B cell (primary cell): ENCODE measurements at regions of chr5 and their contacts with region 1.

Region 1: GRCh38 chr5:150801117-150801927 is 22.8 kb downstream of the SMIM3 start:
- DNase-seq: peak; percentile 69
- ATAC-seq: no peak
- H3K4me3 ChIP-seq: no peak overlapping the region
- H3K4me3 Mint-ChIP-seq: no peak overlapping the region
- H3K27ac ChIP-seq: no peak overlapping the region
- H3K27ac Mint-ChIP-seq: no peak overlapping the region
- H3K4me1 ChIP-seq: peaks cover 3 to 4% of the 10 kb centered on the region in 2 donors
- H3K4me1 Mint-ChIP-seq: no peaks in the 10 kb centered on the region
- H3K27me3 ChIP-seq: peaks cover 0 to 7% (median 5%) of the 10 kb centered on the region in 4 experiments
- H3K27me3 Mint-ChIP-seq: peaks cover 30% of the 10 kb centered on the region
- CTCF ChIP-seq: peak; percentile 83

Region 2: DNA sequence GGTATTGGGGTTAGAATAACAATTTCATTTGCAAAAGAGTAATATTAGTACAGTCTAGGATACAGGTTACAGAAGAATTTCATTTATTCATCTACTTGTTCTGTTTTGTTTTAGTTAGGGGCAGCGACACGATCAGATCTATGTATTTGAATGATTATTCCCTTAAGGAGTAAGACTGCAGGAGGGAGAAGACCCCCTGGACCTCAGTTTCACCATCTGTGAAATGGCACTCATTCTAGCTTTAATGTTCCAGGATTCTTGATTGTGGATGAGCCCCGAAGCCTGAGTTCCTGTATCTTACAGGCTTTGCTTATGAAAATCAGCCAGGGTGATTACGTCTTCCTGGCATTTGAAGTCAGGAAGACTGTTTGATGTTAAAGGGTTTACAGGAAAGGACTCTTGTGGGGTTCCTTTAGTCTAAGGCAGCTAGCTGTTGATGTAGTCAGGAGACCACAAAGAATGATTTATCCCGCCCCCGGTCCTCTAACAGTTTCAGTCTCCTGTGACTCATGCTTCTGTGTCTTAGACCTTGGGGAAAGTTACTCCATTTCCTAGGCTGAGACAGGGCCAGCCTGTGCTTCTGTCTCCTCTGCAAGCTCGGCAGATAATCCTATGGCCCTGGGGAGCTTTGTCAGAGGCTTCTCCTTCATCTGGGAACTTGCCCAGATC is 11.2 kb before region 1 on chr5:
- CTCF ChIA-PET with region 1: interaction called, 15 read pairs
- POLR2A ChIA-PET with region 1: no interaction called
- intact Hi-C with region 1: no loop called
- DNase-seq: no peak
- ATAC-seq: no peak
- H3K4me3 ChIP-seq: no peak overlapping the region
- H3K4me3 Mint-ChIP-seq: no peak overlapping the region
- H3K27ac ChIP-seq: no peak overlapping the region
- H3K27ac Mint-ChIP-seq: no peak overlapping the region
- H3K4me1 ChIP-seq: no peaks in the 10 kb centered on the region
- H3K4me1 Mint-ChIP-seq: no peaks in the 10 kb centered on the region
- H3K27me3 ChIP-seq: peaks cover 0 to 22% (median 13%) of the 10 kb centered on the region in 4 experiments
- H3K27me3 Mint-ChIP-seq: peaks cover 62% of the 10 kb centered on the region
- CTCF ChIP-seq: no peak

Region 3: GRCh38 chr5:150836703-150837102 is 35.4 kb after region 1 on chr5:
- CTCF ChIA-PET with region 1: no interaction called
- POLR2A ChIA-PET with region 1: no interaction called
- intact Hi-C with region 1: no loop called
- DNase-seq: no peak
- ATAC-seq: no peak
- H3K4me3 ChIP-seq: no peak overlapping the region
- H3K4me3 Mint-ChIP-seq: no peak overlapping the region
- H3K27ac ChIP-seq: no peak overlapping the region
- H3K27ac Mint-ChIP-seq: no peak overlapping the region
- H3K4me1 ChIP-seq: no peaks in the 10 kb centered on the region
- H3K4me1 Mint-ChIP-seq: no peaks in the 10 kb centered on the region
- H3K27me3 ChIP-seq: peaks cover 0 to 11% (median 5%) of the 10 kb centered on the region in 4 experiments
- H3K27me3 Mint-ChIP-seq: peaks cover 31% of the 10 kb centered on the region
- CTCF ChIP-seq: no peak

Region 4: GRCh38 chr5:150846654-150847333 is 45.5 kb after region 1 on chr5:
- CTCF ChIA-PET with region 1: interaction called, 71 read pairs
- POLR2A ChIA-PET with region 1: interaction called, 3 read pairs
- intact Hi-C with region 1: loop called (anchors 1 kb)
- DNase-seq: peak; percentile 84
- ATAC-seq: peak; percentile 97
- H3K4me3 ChIP-seq: peak overlapping the region; percentile 31 to 58 (median 45)
- H3K4me3 Mint-ChIP-seq: peak overlapping the region; percentile 84
- H3K27ac ChIP-seq: no peak overlapping the region
- H3K27ac Mint-ChIP-seq: peak overlapping the region; percentile 54
- H3K4me1 ChIP-seq: peaks cover 4 to 11% of the 10 kb centered on the region in 2 donors
- H3K4me1 Mint-ChIP-seq: peaks cover 8% of the 10 kb centered on the region
- H3K27me3 ChIP-seq: no peaks in the 10 kb centered on the region
- H3K27me3 Mint-ChIP-seq: peaks cover 4% of the 10 kb centered on the region
- CTCF ChIP-seq: peak; percentile 79

Region 5: DNA sequence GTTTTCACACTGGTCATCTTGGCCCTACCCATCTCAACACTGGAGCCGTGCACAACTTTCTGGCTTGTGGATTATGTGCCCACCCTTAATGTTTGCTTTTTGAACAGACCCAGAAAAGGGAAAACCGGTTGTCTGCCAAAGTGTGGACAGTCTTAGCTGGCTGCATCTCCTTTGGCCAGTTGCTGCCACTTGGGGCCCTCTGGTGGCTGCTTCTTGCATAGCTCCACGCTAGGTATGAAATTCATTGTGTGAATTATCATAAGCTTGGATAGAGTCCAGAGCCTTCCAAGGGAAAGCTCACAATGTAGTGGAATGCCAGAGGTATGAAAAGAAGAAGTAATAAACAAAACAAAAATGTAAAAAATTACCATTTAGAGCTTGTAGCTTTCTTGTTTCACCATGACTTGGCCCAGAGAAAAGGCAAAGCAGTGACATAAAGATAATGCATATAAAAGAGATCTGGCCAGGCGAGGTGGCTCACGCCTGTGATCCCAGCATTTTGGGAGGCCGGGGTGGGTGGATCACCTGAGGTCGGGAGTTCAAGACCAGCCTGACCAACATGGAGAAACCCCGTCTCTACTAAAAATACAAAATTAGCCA is 514.8 kb after region 1 on chr5:
- CTCF ChIA-PET with region 1: interaction called, 4 read pairs
- POLR2A ChIA-PET with region 1: no interaction called
- intact Hi-C with region 1: loop called (anchors 10 kb)
- DNase-seq: peak; percentile 65
- ATAC-seq: peak; percentile 76
- H3K4me3 ChIP-seq: no peak overlapping the region
- H3K4me3 Mint-ChIP-seq: no peak overlapping the region
- H3K27ac ChIP-seq: no peak overlapping the region
- H3K27ac Mint-ChIP-seq: no peak overlapping the region
- H3K4me1 ChIP-seq: peaks cover 9 to 16% of the 10 kb centered on the region in 2 donors
- H3K4me1 Mint-ChIP-seq: peaks cover 10% of the 10 kb centered on the region
- H3K27me3 ChIP-seq: no peaks in the 10 kb centered on the region
- H3K27me3 Mint-ChIP-seq: no peaks in the 10 kb centered on the region
- CTCF ChIP-seq: peak; percentile 95